Heart left ventricle (tissue), 16 donors: ENCODE measurements at regions of chr11 and their contacts with region 1.

Region 1: GRCh38 chr11:37277896-37278465 is 679.9 kb upstream of the RAG2 start:
- DNase-seq: no peak
- ATAC-seq: no peak
- H3K4me3 ChIP-seq: no peak overlapping the region
- H3K27ac ChIP-seq: no peak overlapping the region
- H3K4me1 ChIP-seq: no peaks in the 10 kb centered on the region
- H3K27me3 ChIP-seq: no peaks in the 10 kb centered on the region
- CTCF ChIP-seq: no peak
- POLR2A ChIP-seq: no peak

Region 2: GRCh38 chr11:37320900-37321299 is 42.9 kb after region 1 on chr11:
- intact Hi-C with region 1: loop called in 1 of 10 experiments (anchors 5 kb)
- DNase-seq: no peak
- ATAC-seq: no peak
- H3K4me3 ChIP-seq: no peak overlapping the region
- H3K27ac ChIP-seq: no peak overlapping the region
- H3K4me1 ChIP-seq: no peaks in the 10 kb centered on the region
- H3K27me3 ChIP-seq: no peaks in the 10 kb centered on the region
- CTCF ChIP-seq: no peak
- POLR2A ChIP-seq: no peak